Adrenal gland (tissue), 19 donors: ENCODE measurements at regions of chr21 and their contacts with region 1.

Region 1: GRCh38 chr21:44551340-44551961 is at the start of gene KRTAP10-2:
- DNase-seq: peak in 1 of 7 donors; percentile 11
- H3K4me3 ChIP-seq: no peak within 1 kb of the TSS
- H3K27ac ChIP-seq: no peak within 1 kb of the TSS
- H3K4me1 ChIP-seq: no peaks in the 10 kb centered on the region
- H3K27me3 ChIP-seq: peaks cover 14% of the 10 kb centered on the region
- CTCF ChIP-seq: no peak
- POLR2A ChIP-seq: no peak
- total RNA-seq, gene KRTAP10-2: not detected

Region 2: DNA sequence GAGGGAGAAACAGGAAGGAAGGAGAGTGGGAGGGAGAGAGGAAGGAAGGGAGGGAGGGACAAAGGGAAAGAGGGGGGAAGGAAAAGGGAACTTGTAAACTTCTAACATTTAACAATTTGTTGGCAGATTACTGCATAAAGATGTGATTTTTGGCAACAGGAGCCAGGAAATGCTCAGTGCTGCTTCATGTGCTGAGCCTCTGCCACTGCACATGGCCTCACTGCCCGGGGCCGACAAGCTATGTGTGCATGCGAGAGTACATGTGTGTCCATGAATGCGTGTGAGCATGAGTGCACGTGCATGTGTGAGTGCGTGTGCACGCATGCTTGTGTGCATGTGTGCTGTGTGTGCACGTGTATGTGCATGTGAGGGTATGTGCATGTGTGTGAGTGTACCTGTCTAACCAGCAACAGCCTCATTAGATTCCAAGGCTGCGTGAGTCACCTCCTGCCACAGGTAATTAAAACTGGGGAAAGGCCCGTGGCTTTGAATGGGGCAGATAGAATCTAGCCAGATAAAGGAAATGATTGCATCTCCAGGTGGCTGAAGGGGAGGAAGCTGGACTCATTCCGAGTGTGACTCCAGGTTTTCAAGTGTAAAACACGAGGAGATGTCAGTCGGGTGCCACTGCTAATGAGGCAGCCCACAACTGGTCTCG is 201.3 kb after region 1 on chr21:
- intact Hi-C with region 1: loop called in 1 of 2 experiments (anchors 10 kb)
- DNase-seq: no peak
- H3K4me3 ChIP-seq: no peak overlapping the region
- H3K27ac ChIP-seq: no peak overlapping the region
- H3K4me1 ChIP-seq: no peaks in the 10 kb centered on the region
- H3K27me3 ChIP-seq: peaks cover 7% of the 10 kb centered on the region
- CTCF ChIP-seq: no peak
- POLR2A ChIP-seq: no peak